ENCODE measurements at regions of chr2 and their contacts with region 1.

Region 1: DNA sequence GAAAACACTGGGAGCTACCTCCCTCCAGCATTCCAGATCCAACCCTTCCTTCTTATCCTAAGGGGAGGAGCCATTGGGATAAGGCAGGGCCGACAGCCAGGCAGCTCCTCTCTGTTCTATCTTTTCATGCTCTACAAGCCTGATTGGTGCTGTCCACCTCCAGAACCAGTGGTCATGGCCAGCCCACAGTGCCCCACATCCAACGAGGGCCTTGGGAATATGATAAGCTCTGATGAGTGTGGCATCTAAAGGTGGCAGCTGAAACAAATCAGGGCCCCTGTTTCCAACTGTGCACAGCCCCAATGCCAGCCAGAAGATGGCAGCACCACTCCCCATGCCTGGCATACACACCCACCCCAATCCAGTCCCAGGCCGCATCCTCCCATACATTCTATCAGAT is 329.3 kb downstream of the C1D start:
- DNase-seq: peak; percentile 46
- H3K4me3 ChIP-seq: no peak overlapping the region
- H3K27ac ChIP-seq: no peak overlapping the region
- H3K4me1 ChIP-seq: no peaks in the 10 kb centered on the region
- CTCF ChIP-seq: peak; percentile 75

Region 2: GRCh38 chr2:67486041-67486796 is 247.3 kb before region 1 on chr2:
- CTCF ChIA-PET with region 1: no interaction called
- POLR2A ChIA-PET with region 1: no interaction called
- intact Hi-C with region 1: no loop called
- DNase-seq: no peak
- H3K4me3 ChIP-seq: no peak overlapping the region
- H3K27ac ChIP-seq: no peak overlapping the region
- H3K4me1 ChIP-seq: no peaks in the 10 kb centered on the region
- CTCF ChIP-seq: no peak

Region 3: GRCh38 chr2:67840460-67841068 is 107.0 kb after region 1 on chr2:
- CTCF ChIA-PET with region 1: no interaction called
- POLR2A ChIA-PET with region 1: no interaction called
- intact Hi-C with region 1: loop called (anchors 1 kb)
- DNase-seq: peak; percentile 65
- H3K4me3 ChIP-seq: no peak overlapping the region
- H3K27ac ChIP-seq: no peak overlapping the region
- H3K4me1 ChIP-seq: no peaks in the 10 kb centered on the region
- CTCF ChIP-seq: peak; percentile 84

Region 4: DNA sequence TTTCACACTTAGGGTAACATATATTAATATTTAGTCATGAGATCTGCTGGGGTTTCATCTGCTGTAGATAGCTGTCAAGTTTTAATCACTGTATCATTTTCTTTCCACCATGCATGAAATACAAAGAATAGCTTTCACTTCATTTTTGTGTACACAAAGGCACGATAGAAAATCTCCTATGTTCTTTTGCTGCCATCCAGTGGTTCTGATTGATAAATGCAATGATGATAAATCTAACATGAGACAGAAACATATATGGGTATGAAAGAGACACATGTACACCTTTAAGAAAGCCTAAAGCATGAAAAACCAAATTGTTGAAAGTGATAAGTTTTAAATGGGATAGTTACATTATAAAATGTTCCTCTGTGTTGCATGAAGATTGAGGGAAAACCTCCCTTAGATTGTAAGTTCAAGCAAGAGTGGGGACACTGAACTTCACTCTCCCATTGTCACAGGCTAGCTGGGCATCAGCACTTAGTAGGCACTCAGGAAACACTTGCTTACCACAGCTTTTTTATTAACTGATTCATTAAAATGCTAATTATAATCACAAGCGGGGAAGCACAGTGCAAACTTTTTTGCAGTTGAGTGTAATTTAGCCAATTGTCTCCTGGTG is 298.1 kb after region 1 on chr2:
- CTCF ChIA-PET with region 1: no interaction called
- POLR2A ChIA-PET with region 1: interaction called, 3 read pairs
- intact Hi-C with region 1: loop called (anchors 2 kb)
- DNase-seq: peak; percentile 70
- H3K4me3 ChIP-seq: no peak overlapping the region
- H3K27ac ChIP-seq: no peak overlapping the region
- H3K4me1 ChIP-seq: no peaks in the 10 kb centered on the region
- CTCF ChIP-seq: peak; percentile 93

Region 5: GRCh38 chr2:68110102-68110501 is 376.6 kb after region 1 on chr2:
- CTCF ChIA-PET with region 1: no interaction called
- POLR2A ChIA-PET with region 1: no interaction called
- intact Hi-C with region 1: loop called (anchors 5 kb)
- DNase-seq: peak; percentile 57
- H3K4me3 ChIP-seq: no peak overlapping the region
- H3K27ac ChIP-seq: no peak overlapping the region
- H3K4me1 ChIP-seq: no peaks in the 10 kb centered on the region
- CTCF ChIP-seq: peak; percentile 64

Region 6: GRCh38 chr2:68295516-68295915 is 562.0 kb after region 1 on chr2:
- CTCF ChIA-PET with region 1: no interaction called
- POLR2A ChIA-PET with region 1: no interaction called
- intact Hi-C with region 1: loop called (anchors 5 kb)
- DNase-seq: peak; percentile 56
- H3K4me3 ChIP-seq: no peak overlapping the region
- H3K27ac ChIP-seq: no peak overlapping the region
- H3K4me1 ChIP-seq: peaks cover 24% of the 10 kb centered on the region
- CTCF ChIP-seq: no peak

Measured in OCI-LY7 (cell line).